Endothelial cell of umbilical vein (primary cell): ENCODE measurements at regions of chr12 and their contacts with region 1.

Region 1: DNA sequence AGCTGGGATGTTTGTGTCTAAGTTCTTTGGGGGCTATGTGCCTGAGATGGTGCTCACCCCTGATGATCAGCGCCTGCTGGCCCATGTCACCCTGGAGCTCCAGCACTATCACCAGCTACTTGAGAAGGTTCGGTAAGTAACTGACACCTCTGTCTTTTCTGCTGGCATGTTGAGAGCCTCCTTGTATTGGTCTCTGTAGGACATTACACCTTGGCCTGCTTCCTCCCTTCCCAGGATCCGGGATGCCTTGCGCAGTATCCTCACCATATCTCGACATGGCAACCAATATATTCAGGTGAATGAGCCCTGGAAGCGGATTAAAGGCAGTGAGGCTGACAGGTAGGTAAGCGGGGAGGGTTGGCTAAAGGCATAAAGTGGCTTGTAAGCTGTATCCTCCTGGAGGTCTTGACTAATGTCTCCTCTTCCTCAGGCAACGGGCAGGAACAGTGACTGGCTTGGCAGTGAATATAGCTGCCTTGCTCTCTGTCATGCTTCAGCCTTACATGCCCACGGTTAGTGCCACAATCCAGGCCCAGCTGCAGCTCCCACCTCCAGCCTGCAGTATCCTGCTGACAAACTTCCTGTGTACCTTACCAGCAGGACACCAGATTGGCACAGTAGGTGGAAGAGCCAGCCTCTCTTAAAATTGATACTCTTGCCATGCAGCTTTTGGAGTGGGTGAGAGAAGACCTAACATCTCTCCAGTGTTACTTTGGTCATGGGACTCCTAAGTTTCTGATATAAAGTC is 5.4 kb downstream of the DDIT3 start:
- DNase-seq: no peak
- H3K4me3 ChIP-seq: no peak overlapping the region
- H3K27ac ChIP-seq: no peak overlapping the region
- H3K4me1 ChIP-seq: peaks cover 23% of the 10 kb centered on the region
- H3K27me3 ChIP-seq: no peaks in the 10 kb centered on the region
- CTCF ChIP-seq: no peak
- POLR2A ChIP-seq: no peak

Region 2: DNA sequence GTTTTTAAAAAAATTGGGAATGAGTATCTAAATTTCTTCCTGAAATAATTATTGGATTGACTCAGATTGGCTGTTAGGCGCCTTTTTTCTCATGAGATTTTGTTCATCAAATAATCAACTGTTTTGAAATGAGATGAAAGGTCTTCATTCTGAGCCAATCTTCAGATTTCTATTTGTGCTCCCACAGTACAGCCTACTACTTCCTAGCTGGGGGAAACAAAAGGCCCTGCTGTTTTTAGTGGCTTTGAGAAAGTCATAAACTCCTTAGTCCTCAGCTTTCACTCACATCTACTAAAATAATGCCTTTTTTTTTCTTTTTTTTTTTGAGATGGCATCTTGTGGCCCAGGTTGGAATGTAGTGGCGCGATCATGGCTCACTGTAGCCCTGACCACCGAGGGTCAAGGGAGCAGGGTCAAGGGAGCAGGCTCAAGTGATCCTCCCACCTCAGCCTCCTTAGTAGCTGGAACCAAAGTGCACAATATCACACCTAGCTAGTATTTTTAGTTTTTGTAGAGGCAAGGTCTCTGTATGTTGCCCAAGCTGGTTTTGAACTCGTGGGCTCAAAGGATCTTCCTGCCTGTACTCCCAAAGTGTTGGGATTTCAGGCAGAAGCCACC is 805.0 kb before region 1 on chr12:
- CTCF ChIA-PET with region 1: no interaction called
- POLR2A ChIA-PET with region 1: no interaction called
- dilution Hi-C with region 1: no loop called
- intact Hi-C with region 1: no loop called
- DNase-seq: no peak
- H3K4me3 ChIP-seq: no peak overlapping the region
- H3K27ac ChIP-seq: no peak overlapping the region
- H3K4me1 ChIP-seq: no peaks in the 10 kb centered on the region
- H3K27me3 ChIP-seq: no peaks in the 10 kb centered on the region
- CTCF ChIP-seq: no peak
- POLR2A ChIP-seq: no peak

Region 3: DNA sequence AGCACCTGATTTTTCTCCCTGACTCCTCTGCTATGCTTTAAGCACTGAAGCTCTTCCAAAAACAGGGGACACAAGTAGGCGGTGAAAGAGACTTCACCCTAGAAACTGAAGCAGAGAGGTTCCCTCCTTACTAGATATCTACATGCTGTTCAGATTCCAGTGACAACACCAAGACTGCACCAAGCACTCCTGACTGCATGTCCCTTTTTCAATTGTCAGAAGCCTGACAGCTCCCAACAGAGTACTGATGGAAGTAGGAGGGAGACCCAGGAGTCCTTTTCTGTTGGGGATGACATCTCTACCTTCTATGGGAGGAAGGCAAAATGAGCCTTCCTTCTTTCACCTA is 21.7 kb after region 1 on chr12:
- CTCF ChIA-PET with region 1: no interaction called
- POLR2A ChIA-PET with region 1: interaction called, 10 read pairs
- dilution Hi-C with region 1: no loop called
- intact Hi-C with region 1: no loop called
- DNase-seq: no peak
- H3K4me3 ChIP-seq: no peak overlapping the region
- H3K27ac ChIP-seq: no peak overlapping the region
- H3K4me1 ChIP-seq: no peaks in the 10 kb centered on the region
- H3K27me3 ChIP-seq: no peaks in the 10 kb centered on the region
- CTCF ChIP-seq: no peak
- POLR2A ChIP-seq: no peak